Caco-2 (cell line): ENCODE measurements at regions of chr4 and their contacts with region 1.

Region 1: DNA sequence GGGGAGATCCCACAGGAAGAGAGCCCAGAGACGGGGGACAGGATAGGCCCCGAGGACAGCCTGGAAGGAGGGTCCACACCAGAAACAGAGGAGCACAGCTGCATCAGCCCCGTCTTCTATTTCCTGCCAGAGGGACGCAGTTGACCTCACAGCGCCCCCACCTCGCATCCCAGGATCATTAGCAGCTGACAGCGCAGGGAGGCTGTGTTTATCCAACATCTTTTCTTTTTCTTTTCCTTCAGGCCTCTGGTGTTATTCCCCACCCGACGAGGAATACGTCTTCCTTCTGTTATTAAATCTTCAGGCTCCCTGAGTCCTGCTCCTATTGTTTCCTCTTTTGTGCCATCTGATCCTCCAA is 75.4 kb downstream of the DCHS2 start:
- DNase-seq: no peak
- H3K4me3 ChIP-seq: no peak overlapping the region
- H3K4me3 Mint-ChIP-seq: peak overlapping the region; percentile 75
- H3K27ac Mint-ChIP-seq: no peak overlapping the region
- H3K4me1 ChIP-seq: no peaks in the 10 kb centered on the region
- H3K4me1 Mint-ChIP-seq: peaks cover 12% of the 10 kb centered on the region
- H3K27me3 ChIP-seq: no peaks in the 10 kb centered on the region
- H3K27me3 Mint-ChIP-seq: peaks cover 15% of the 10 kb centered on the region
- CTCF ChIP-seq: peak; percentile 17 to 31

Region 2: GRCh38 chr4:154626793-154627484 is 210.8 kb after region 1 on chr4:
- CTCF ChIA-PET with region 1: no interaction called
- POLR2A ChIA-PET with region 1: no interaction called
- intact Hi-C with region 1: loop called (anchors 10 kb)
- DNase-seq: peak; percentile 85 to 88
- H3K4me3 ChIP-seq: peak overlapping the region; percentile 41
- H3K4me3 Mint-ChIP-seq: no peak overlapping the region
- H3K27ac Mint-ChIP-seq: no peak overlapping the region
- H3K4me1 ChIP-seq: peaks cover 6% of the 10 kb centered on the region
- H3K4me1 Mint-ChIP-seq: peaks cover 9% of the 10 kb centered on the region
- H3K27me3 ChIP-seq: no peaks in the 10 kb centered on the region; the same call in 1 of the 2 replicates
- H3K27me3 Mint-ChIP-seq: peaks cover 4% of the 10 kb centered on the region
- CTCF ChIP-seq: peak; percentile 79 to 95